ENCODE measurements at regions of chr6 and their contacts with region 1.

Region 1: GRCh38 chr6:148947621-148948444 is 201.0 kb downstream of the UST start:
- DNase-seq: peak; percentile 53 to 56
- H3K4me3 ChIP-seq: no peak overlapping the region
- H3K27ac ChIP-seq: no peak overlapping the region
- H3K4me1 ChIP-seq: no peaks in the 10 kb centered on the region
- H3K27me3 ChIP-seq: no peaks in the 10 kb centered on the region
- CTCF ChIP-seq: peak; percentile 86

Region 2: GRCh38 chr6:148746363-148747144 is 201.3 kb before region 1 on chr6 and contains the start of gene UST:
- CTCF ChIA-PET with region 1: no interaction called
- POLR2A ChIA-PET with region 1: no interaction called
- intact Hi-C with region 1: loop called (anchors 1 kb)
- DNase-seq: peak; percentile 70 to 80
- H3K4me3 ChIP-seq: peak within 1 kb of the TSS; percentile 82
- H3K27ac ChIP-seq: 0 out of 2 replicates have a peak within 1 kb of the TSS, but pooled peaks have one; percentile 20
- H3K4me1 ChIP-seq: peaks cover 8% of the 10 kb centered on the region
- H3K27me3 ChIP-seq: no peaks in the 10 kb centered on the region
- CTCF ChIP-seq: peak; percentile 61
- total RNA-seq, gene UST: 3.9 and 4.2 TPM in 2 replicates

Region 3: GRCh38 chr6:148835920-148836441 is 111.9 kb before region 1 on chr6:
- CTCF ChIA-PET with region 1: no interaction called
- POLR2A ChIA-PET with region 1: no interaction called
- intact Hi-C with region 1: no loop called
- DNase-seq: no peak
- H3K4me3 ChIP-seq: no peak overlapping the region
- H3K27ac ChIP-seq: no peak overlapping the region
- H3K4me1 ChIP-seq: peaks cover 39% of the 10 kb centered on the region
- H3K27me3 ChIP-seq: no peaks in the 10 kb centered on the region
- CTCF ChIP-seq: no peak

Region 4: GRCh38 chr6:149316798-149317655 is 369.2 kb after region 1 on chr6:
- CTCF ChIA-PET with region 1: no interaction called
- POLR2A ChIA-PET with region 1: no interaction called
- intact Hi-C with region 1: no loop called
- DNase-seq: peak; percentile 74 to 78
- H3K4me3 ChIP-seq: peak overlapping the region; percentile 98
- H3K27ac ChIP-seq: peak overlapping the region; percentile 75
- H3K4me1 ChIP-seq: peaks cover 34% of the 10 kb centered on the region
- H3K27me3 ChIP-seq: no peaks in the 10 kb centered on the region
- CTCF ChIP-seq: no peak